Activated CD4-positive, alpha-beta memory T cell treated with anti-CD3 and anti-CD28 coated beads, Interleukin-2, amount 10 ng/mL, durations not matched to agents 7 days and 5 days (primary cell): ENCODE measurements at regions of chr5 and their contacts with region 1.

Region 1: GRCh38 chr5:112146323-112147226 is 272.5 kb downstream of the EPB41L4A start:
- DNase-seq: peak; percentile 65
- H3K4me3 Mint-ChIP-seq: no peak overlapping the region
- H3K27ac Mint-ChIP-seq: no peak overlapping the region
- H3K4me1 Mint-ChIP-seq: no peaks in the 10 kb centered on the region
- H3K27me3 Mint-ChIP-seq: peaks cover 8% of the 10 kb centered on the region

Region 2: GRCh38 chr5:111550279-111551020 is 596.1 kb before region 1 on chr5:
- CTCF ChIA-PET with region 1: interaction called, 10 read pairs
- POLR2A ChIA-PET with region 1: no interaction called
- DNase-seq: peak; percentile 68
- H3K4me3 Mint-ChIP-seq: no peak overlapping the region
- H3K27ac Mint-ChIP-seq: no peak overlapping the region
- H3K4me1 Mint-ChIP-seq: peaks cover 15% of the 10 kb centered on the region
- H3K27me3 Mint-ChIP-seq: peaks cover 6% of the 10 kb centered on the region

Region 3: DNA sequence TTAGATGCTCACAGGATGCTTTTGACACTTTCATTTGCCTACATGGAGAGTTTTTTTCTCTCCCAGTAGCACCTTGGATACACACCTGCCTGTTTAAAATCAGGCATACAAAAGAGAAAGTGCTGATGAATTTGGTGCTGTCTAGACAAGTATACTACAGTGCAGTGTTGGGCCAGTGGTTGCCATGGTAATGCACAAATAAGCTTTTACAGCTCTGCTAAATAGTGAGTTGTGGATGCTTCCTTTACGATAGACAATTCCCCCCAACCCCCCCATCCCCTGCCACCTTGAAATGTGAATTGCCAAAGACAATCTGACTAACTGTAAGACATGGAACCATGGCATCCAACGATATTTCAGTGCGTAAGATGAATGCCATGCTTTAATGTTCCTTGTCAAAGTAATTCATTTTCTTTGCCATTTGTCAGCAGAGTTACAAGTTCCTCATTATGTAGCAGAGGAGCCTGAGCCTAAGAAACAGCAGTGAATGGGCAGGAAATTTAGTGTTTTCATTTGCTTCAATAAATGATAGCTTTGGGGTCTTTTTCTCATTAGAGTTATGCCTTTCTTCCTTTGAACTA is 298.1 kb before region 1 on chr5:
- CTCF ChIA-PET with region 1: no interaction called
- POLR2A ChIA-PET with region 1: no interaction called
- DNase-seq: no peak
- H3K4me3 Mint-ChIP-seq: no peak overlapping the region
- H3K27ac Mint-ChIP-seq: no peak overlapping the region
- H3K4me1 Mint-ChIP-seq: no peaks in the 10 kb centered on the region
- H3K27me3 Mint-ChIP-seq: no peaks in the 10 kb centered on the region

Region 4: DNA sequence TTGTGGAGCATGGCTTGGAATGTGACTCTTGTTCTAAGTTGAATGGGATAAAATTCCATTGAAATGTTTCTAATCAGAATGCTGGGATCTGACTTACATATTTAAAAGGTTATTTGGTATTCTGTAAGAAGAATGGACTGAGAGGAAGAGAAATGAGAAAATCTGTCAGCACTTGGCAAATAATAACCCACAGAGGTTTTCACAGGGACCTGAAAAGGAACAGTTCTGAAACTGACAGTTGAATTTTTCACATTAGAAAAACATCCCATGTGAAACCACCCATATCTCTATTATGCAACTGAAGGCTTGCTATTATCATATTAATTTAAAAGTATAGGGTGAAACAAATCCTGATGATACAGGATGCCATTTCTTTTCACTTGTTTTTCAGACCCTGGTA is 30.2 kb before region 1 on chr5:
- CTCF ChIA-PET with region 1: no interaction called
- POLR2A ChIA-PET with region 1: no interaction called
- DNase-seq: no peak
- H3K4me3 Mint-ChIP-seq: no peak overlapping the region
- H3K27ac Mint-ChIP-seq: no peak overlapping the region
- H3K4me1 Mint-ChIP-seq: no peaks in the 10 kb centered on the region
- H3K27me3 Mint-ChIP-seq: peaks cover 9% of the 10 kb centered on the region